Activated CD8-positive, alpha-beta memory T cell treated with anti-CD3 and anti-CD28 coated beads, Interleukin-2, amount 10 ng/mL, durations not matched to agents 7 days and 5 days (primary cell): ENCODE measurements at regions of chr12 and their contacts with region 1.

Region 1: GRCh38 chr12:53352331-53353256 is 16.4 kb upstream of the SP7 start:
- DNase-seq: peak; percentile 90
- ATAC-seq: peak; percentile 100
- H3K4me3 Mint-ChIP-seq: no peak overlapping the region
- H3K27ac Mint-ChIP-seq: peak overlapping the region; percentile 20
- H3K4me1 Mint-ChIP-seq: peaks cover 8% of the 10 kb centered on the region
- H3K27me3 Mint-ChIP-seq: no peaks in the 10 kb centered on the region

Region 2: DNA sequence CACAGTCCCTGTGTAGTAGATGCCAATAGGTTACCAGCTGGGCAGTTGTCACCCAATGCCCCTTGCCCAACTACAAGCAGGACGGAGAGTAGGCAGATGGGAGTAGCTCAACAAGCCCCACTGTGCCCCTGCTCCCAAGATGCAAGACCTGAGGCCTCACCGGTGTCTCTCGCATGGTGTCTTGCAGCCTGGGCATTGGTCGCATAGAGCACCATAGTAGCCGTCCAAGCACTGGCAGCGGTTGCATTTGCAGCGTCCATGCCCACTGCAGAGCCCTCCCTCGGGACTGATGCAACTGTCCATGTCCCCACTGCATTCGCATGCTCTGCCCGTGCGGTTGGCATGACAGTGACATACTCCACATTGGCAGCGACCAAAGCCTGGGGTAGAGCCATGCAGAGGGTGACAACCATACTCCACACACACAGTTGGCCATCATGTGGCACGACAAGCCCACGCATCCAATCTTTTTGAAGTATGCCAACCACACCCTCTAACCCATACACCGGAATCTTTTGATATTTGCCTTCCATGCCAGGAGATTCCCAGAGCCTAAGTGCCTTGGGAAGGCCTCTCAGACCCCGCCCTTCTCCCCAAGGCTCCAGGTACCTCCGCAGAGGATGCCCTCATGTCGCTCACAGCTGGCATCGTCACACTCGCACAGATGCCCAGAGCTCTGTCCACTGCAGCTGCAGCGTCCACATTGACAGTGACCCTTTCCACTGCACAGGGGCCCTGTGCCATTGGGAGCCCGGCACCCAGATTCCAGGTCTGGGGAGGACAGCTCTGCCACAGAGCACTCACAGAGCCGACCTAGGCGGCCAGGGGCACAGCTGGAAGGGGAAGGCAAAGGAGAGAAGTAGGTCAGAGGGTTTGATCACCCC is 159.8 kb before region 1 on chr12:
- CTCF ChIA-PET with region 1: no interaction called
- DNase-seq: no peak
- ATAC-seq: no peak
- H3K4me3 Mint-ChIP-seq: no peak overlapping the region
- H3K27ac Mint-ChIP-seq: no peak overlapping the region
- H3K4me1 Mint-ChIP-seq: peaks cover 34% of the 10 kb centered on the region
- H3K27me3 Mint-ChIP-seq: no peaks in the 10 kb centered on the region

Region 3: GRCh38 chr12:53379389-53380103 is 27.0 kb after region 1 on chr12:
- CTCF ChIA-PET with region 1: interaction called, 110 read pairs
- DNase-seq: peak; percentile 99
- ATAC-seq: peak; percentile 77
- H3K4me3 Mint-ChIP-seq: no peak overlapping the region
- H3K27ac Mint-ChIP-seq: no peak overlapping the region
- H3K4me1 Mint-ChIP-seq: peaks cover 34% of the 10 kb centered on the region
- H3K27me3 Mint-ChIP-seq: no peaks in the 10 kb centered on the region

Region 4: GRCh38 chr12:53414756-53415417 is 62.3 kb after region 1 on chr12:
- CTCF ChIA-PET with region 1: interaction called, 160 read pairs
- DNase-seq: no peak
- ATAC-seq: no peak
- H3K4me3 Mint-ChIP-seq: no peak overlapping the region
- H3K27ac Mint-ChIP-seq: no peak overlapping the region
- H3K4me1 Mint-ChIP-seq: peaks cover 23% of the 10 kb centered on the region
- H3K27me3 Mint-ChIP-seq: no peaks in the 10 kb centered on the region

Region 5: GRCh38 chr12:53500776-53501614 is 148.4 kb after region 1 on chr12 and contains the start of gene TARBP2:
- CTCF ChIA-PET with region 1: interaction called, 16 read pairs
- DNase-seq: peak; percentile 98
- ATAC-seq: peak; percentile 82
- H3K4me3 Mint-ChIP-seq: peak within 1 kb of the TSS; percentile 83
- H3K27ac Mint-ChIP-seq: peak within 1 kb of the TSS; percentile 96
- H3K4me1 Mint-ChIP-seq: peaks cover 37% of the 10 kb centered on the region
- H3K27me3 Mint-ChIP-seq: no peaks in the 10 kb centered on the region
- total RNA-seq, gene TARBP2: 29.7 to 38.7 TPM